Gastrocnemius medialis (tissue), 4 donors: ENCODE measurements at regions of chr15 and their contacts with region 1.

Region 1: GRCh38 chr15:70679919-70680231 is 83.5 kb downstream of the UACA start:
- DNase-seq: no peak
- ATAC-seq: no peak
- H3K4me3 ChIP-seq: no peak overlapping the region
- H3K27ac ChIP-seq: peak overlapping the region in 3 of 4 donors; percentile 42 to 53 (median 51)
- H3K4me1 ChIP-seq: peaks cover 8 to 13% of the 10 kb centered on the region in 2 donors
- H3K27me3 ChIP-seq: no peaks in the 10 kb centered on the region
- CTCF ChIP-seq: peak in 1 of 5 experiments; percentile 0
- POLR2A ChIP-seq: no peak

Region 2: GRCh38 chr15:70806992-70807712 is 127.3 kb after region 1 on chr15:
- in situ Hi-C with region 1: loop called in 3 of 4 experiments (anchors 5 to 10 kb)
- intact Hi-C with region 1: loop called (anchors 1 kb)
- DNase-seq: peak; percentile 22 to 46
- ATAC-seq: no peak
- H3K4me3 ChIP-seq: no peak overlapping the region
- H3K27ac ChIP-seq: peak overlapping the region in 1 of 4 donors; percentile 2
- H3K4me1 ChIP-seq: peaks cover 0 to 14% of the 10 kb centered on the region in 2 donors
- H3K27me3 ChIP-seq: no peaks in the 10 kb centered on the region
- CTCF ChIP-seq: no peak
- POLR2A ChIP-seq: no peak

Region 3: DNA sequence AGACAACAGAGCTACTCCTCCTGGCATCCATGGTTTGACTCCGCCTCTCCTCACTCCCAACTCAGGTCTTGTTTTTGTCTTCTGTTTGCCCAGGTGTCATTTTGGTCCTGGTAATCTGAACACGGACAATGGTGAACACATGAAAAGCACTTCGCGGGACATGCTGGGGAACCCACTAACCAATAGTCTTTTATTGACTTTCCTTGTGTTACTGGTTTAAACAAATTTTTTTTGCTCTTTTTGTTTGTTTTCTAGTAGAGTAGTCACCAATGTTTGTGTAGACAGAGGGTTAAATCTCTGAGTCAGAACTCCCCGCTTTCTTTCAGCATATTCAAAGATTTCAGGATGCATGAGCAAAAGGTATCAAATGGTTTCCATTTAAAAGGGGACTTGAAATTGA is 135.8 kb after region 1 on chr15:
- in situ Hi-C with region 1: loop called in 3 of 4 experiments (anchors 5 to 10 kb)
- intact Hi-C with region 1: loop called (anchors 1 kb)
- DNase-seq: no peak
- ATAC-seq: no peak
- H3K4me3 ChIP-seq: no peak overlapping the region
- H3K27ac ChIP-seq: no peak overlapping the region
- H3K4me1 ChIP-seq: peaks cover 0 to 4% of the 10 kb centered on the region in 2 donors
- H3K27me3 ChIP-seq: no peaks in the 10 kb centered on the region
- CTCF ChIP-seq: no peak
- POLR2A ChIP-seq: no peak